MCF 10A (cell line): ENCODE measurements at regions of chr15 and their contacts with region 1.

Region 1: GRCh38 chr15:39580117-39580484 is 778 bp upstream of the THBS1 start:
- DNase-seq: peak; percentile 95
- H3K4me3 Mint-ChIP-seq: peak overlapping the region; percentile 78
- H3K27ac Mint-ChIP-seq: peak overlapping the region; percentile 24
- H3K4me1 Mint-ChIP-seq: peaks cover 38% of the 10 kb centered on the region
- H3K27me3 Mint-ChIP-seq: no peaks in the 10 kb centered on the region
- CTCF ChIP-seq: peak; percentile 96

Region 2: GRCh38 chr15:38496151-38496550 is 1084.0 kb before region 1 on chr15:
- CTCF ChIA-PET with region 1: no interaction called
- POLR2A ChIA-PET with region 1: no interaction called
- intact Hi-C with region 1: no loop called
- DNase-seq: no peak
- H3K4me3 Mint-ChIP-seq: no peak overlapping the region
- H3K27ac Mint-ChIP-seq: no peak overlapping the region
- H3K4me1 Mint-ChIP-seq: no peaks in the 10 kb centered on the region
- H3K27me3 Mint-ChIP-seq: no peaks in the 10 kb centered on the region
- CTCF ChIP-seq: no peak

Region 3: DNA sequence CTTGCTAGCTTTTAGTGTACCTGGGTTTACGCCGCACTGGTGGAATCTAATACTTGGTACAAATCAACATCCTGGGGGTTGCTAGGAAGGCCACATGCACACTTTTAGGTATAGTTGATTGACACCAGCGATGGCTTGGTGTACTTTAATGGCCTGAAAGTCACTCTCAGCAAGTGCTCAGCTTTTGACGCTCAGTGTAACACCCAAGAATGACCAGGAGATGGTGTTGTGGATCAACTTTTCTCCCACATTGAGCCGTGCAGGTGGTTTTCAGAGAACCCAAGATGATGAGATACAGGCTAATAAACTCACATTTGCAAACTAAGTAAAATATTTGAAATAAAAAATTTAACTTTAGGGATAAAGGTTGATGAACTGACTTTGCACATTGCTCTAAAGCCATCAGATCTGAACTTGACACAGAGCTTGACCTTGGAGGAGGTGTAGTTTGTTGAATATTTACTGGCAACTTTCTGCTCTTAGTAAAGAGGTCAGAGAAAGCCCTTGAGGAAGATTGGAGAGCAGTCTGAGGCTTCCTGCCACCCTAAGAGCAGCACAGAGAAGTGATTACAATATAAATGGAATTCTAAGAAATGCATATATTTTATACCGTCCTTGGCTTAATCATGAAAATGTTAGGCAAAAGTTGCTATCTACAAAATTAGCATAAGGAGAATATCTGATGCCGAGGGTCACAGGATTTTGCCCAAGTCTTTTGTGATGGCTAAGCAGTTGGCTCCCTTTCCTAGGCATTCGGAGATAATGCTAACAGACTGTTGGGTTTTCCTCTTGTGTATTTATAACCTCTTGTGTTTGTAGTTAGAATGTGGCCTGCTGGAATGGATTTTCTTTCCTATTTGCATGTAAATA is 872.1 kb before region 1 on chr15:
- CTCF ChIA-PET with region 1: interaction called, 5 read pairs
- POLR2A ChIA-PET with region 1: interaction called, 8 read pairs
- intact Hi-C with region 1: loop called (anchors 1 kb)
- DNase-seq: peak; percentile 68
- H3K4me3 Mint-ChIP-seq: no peak overlapping the region
- H3K27ac Mint-ChIP-seq: no peak overlapping the region
- H3K4me1 Mint-ChIP-seq: no peaks in the 10 kb centered on the region
- H3K27me3 Mint-ChIP-seq: no peaks in the 10 kb centered on the region
- CTCF ChIP-seq: peak; percentile 76

Region 4: DNA sequence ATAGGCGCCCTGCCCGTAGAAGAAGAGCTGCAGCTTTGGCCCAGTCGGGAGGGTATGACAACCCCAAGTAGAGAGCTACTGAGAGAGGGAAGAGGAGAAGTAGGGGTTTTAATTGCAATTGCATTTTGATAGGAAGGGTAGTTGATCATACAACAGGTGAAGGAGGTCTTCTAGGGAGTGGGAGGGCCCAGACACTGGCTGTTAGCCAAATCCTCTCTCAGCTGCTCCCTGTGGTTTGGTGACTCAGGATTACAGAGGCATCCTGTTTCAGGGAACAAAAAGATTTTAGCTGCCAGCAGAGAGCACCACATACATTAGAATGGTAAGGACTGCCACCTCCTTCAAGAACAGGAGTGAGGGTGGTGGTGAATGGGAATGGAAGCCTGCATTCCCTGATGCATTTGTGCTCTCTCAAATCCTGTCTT is 408.1 kb before region 1 on chr15:
- CTCF ChIA-PET with region 1: interaction called, 123 read pairs
- POLR2A ChIA-PET with region 1: interaction called, 69 read pairs
- intact Hi-C with region 1: loop called (anchors 1 kb)
- DNase-seq: peak; percentile 97
- H3K4me3 Mint-ChIP-seq: no peak overlapping the region
- H3K27ac Mint-ChIP-seq: no peak overlapping the region
- H3K4me1 Mint-ChIP-seq: peaks cover 22% of the 10 kb centered on the region
- H3K27me3 Mint-ChIP-seq: no peaks in the 10 kb centered on the region
- CTCF ChIP-seq: peak; percentile 76

Region 5: GRCh38 chr15:39202641-39203040 is 377.5 kb before region 1 on chr15:
- CTCF ChIA-PET with region 1: interaction called, 16 read pairs
- POLR2A ChIA-PET with region 1: interaction called, 16 read pairs
- intact Hi-C with region 1: no loop called
- DNase-seq: peak; percentile 43
- H3K4me3 Mint-ChIP-seq: no peak overlapping the region
- H3K27ac Mint-ChIP-seq: peak overlapping the region; percentile 93
- H3K4me1 Mint-ChIP-seq: peaks cover 54% of the 10 kb centered on the region
- H3K27me3 Mint-ChIP-seq: no peaks in the 10 kb centered on the region
- CTCF ChIP-seq: no peak

Region 6: GRCh38 chr15:39511000-39511915 is 68.8 kb before region 1 on chr15:
- CTCF ChIA-PET with region 1: interaction called, 3 read pairs
- POLR2A ChIA-PET with region 1: interaction called, 3 read pairs
- intact Hi-C with region 1: loop called (anchors 5 kb)
- DNase-seq: peak; percentile 64
- H3K4me3 Mint-ChIP-seq: no peak overlapping the region
- H3K27ac Mint-ChIP-seq: no peak overlapping the region
- H3K4me1 Mint-ChIP-seq: peaks cover 16% of the 10 kb centered on the region
- H3K27me3 Mint-ChIP-seq: no peaks in the 10 kb centered on the region
- CTCF ChIP-seq: no peak

Region 7: GRCh38 chr15:39686000-39686613 is 106.0 kb after region 1 on chr15:
- CTCF ChIA-PET with region 1: interaction called, 17 read pairs
- POLR2A ChIA-PET with region 1: no interaction called
- intact Hi-C with region 1: loop called (anchors 1 kb)
- DNase-seq: peak; percentile 62
- H3K4me3 Mint-ChIP-seq: no peak overlapping the region
- H3K27ac Mint-ChIP-seq: no peak overlapping the region
- H3K4me1 Mint-ChIP-seq: no peaks in the 10 kb centered on the region
- H3K27me3 Mint-ChIP-seq: no peaks in the 10 kb centered on the region
- CTCF ChIP-seq: peak; percentile 67